T-cell (primary cell): ENCODE measurements at regions of chr17 and their contacts with region 1.

Region 1: GRCh38 chr17:2511462-2512369 is at the start of gene METTL16:
- DNase-seq: peak; percentile 90 to 100 (median 97)
- ATAC-seq: peak; percentile 98 to 99 (median 99)
- H3K4me3 ChIP-seq: peak within 1 kb of the TSS; percentile 70 to 78
- H3K4me3 Mint-ChIP-seq: no peak within 1 kb of the TSS
- H3K27ac ChIP-seq: peak within 1 kb of the TSS; percentile 91
- H3K27ac Mint-ChIP-seq: no peak within 1 kb of the TSS
- H3K4me1 ChIP-seq: peaks cover 16 to 23% of the 10 kb centered on the region in 2 experiments
- H3K4me1 Mint-ChIP-seq: peaks cover 13 to 19% (median 18%) of the 10 kb centered on the region in 3 donors
- H3K27me3 ChIP-seq: no peaks in the 10 kb centered on the region
- H3K27me3 Mint-ChIP-seq: no peaks in the 10 kb centered on the region
- total RNA-seq, gene METTL16: 43.0 to 51.1 (median 43.2) TPM

Region 2: GRCh38 chr17:2396568-2397246 is 115.0 kb before region 1 on chr17:
- CTCF ChIA-PET with region 1: no interaction called
- POLR2A ChIA-PET with region 1: no interaction called
- DNase-seq: peak in 15 of 35 experiments; percentile 22 to 57 (median 35)
- ATAC-seq: no peak
- H3K4me3 ChIP-seq: peak overlapping the region; percentile 25 to 30
- H3K4me3 Mint-ChIP-seq: peak overlapping the region; percentile 39 to 99 (median 54)
- H3K27ac ChIP-seq: peak overlapping the region; percentile 61
- H3K27ac Mint-ChIP-seq: peak overlapping the region; percentile 67 to 85
- H3K4me1 ChIP-seq: peaks cover 22 to 74% of the 10 kb centered on the region in 2 experiments
- H3K4me1 Mint-ChIP-seq: peaks cover 50 to 63% (median 58%) of the 10 kb centered on the region in 3 donors
- H3K27me3 ChIP-seq: no peaks in the 10 kb centered on the region
- H3K27me3 Mint-ChIP-seq: no peaks in the 10 kb centered on the region

Region 3: GRCh38 chr17:2482218-2482617 is 29.5 kb before region 1 on chr17:
- CTCF ChIA-PET with region 1: interaction called in 1 of 2 experiments, 3 read pairs
- POLR2A ChIA-PET with region 1: interaction called in 1 of 2 experiments, 15 read pairs
- DNase-seq: peak in 5 of 35 experiments; percentile 2 to 44 (median 21)
- ATAC-seq: peak; percentile 47 to 87 (median 70)
- H3K4me3 ChIP-seq: peak overlapping the region in 1 of 2 donors; percentile 6
- H3K4me3 Mint-ChIP-seq: peak overlapping the region; percentile 34 to 77 (median 39)
- H3K27ac ChIP-seq: peak overlapping the region; percentile 65
- H3K27ac Mint-ChIP-seq: peak overlapping the region; percentile 84 to 89
- H3K4me1 ChIP-seq: peaks cover 6% of the 10 kb centered on the region in 2 experiments
- H3K4me1 Mint-ChIP-seq: peaks cover 48 to 59% (median 50%) of the 10 kb centered on the region in 3 donors
- H3K27me3 ChIP-seq: no peaks in the 10 kb centered on the region
- H3K27me3 Mint-ChIP-seq: no peaks in the 10 kb centered on the region

Region 4: DNA sequence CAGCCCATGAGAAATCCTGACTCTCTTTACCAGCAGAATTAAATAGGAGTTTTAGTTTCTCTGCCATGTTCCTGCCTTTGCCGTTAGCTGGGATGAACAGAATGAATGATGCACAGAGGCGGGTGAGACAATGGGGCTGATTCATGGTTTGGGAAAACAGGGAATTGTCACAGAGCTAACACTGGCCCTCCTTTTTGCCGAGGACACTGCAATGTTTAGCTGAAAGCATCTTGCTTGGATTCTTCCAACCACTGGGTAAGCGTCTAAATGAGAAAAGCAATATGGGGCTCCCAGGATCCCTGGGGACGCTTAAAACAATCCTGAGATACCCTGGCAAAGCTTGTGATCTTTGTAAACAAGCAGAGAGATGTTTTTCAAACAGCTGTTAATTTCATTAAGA is 68.9 kb after region 1 on chr17:
- CTCF ChIA-PET with region 1: no interaction called
- POLR2A ChIA-PET with region 1: no interaction called
- DNase-seq: no peak
- ATAC-seq: no peak
- H3K4me3 ChIP-seq: no peak overlapping the region
- H3K4me3 Mint-ChIP-seq: no peak overlapping the region
- H3K27ac ChIP-seq: no peak overlapping the region
- H3K27ac Mint-ChIP-seq: no peak overlapping the region
- H3K4me1 ChIP-seq: no peaks in the 10 kb centered on the region
- H3K4me1 Mint-ChIP-seq: no peaks in the 10 kb centered on the region
- H3K27me3 ChIP-seq: peaks cover 0 to 10% of the 10 kb centered on the region in 2 experiments
- H3K27me3 Mint-ChIP-seq: peaks cover 0 to 14% of the 10 kb centered on the region in 2 donors

Region 5: GRCh38 chr17:2656283-2656682 is 144.6 kb after region 1 on chr17:
- CTCF ChIA-PET with region 1: no interaction called
- POLR2A ChIA-PET with region 1: interaction called in 1 of 2 experiments, 10 read pairs
- DNase-seq: no peak
- ATAC-seq: no peak
- H3K4me3 ChIP-seq: no peak overlapping the region
- H3K4me3 Mint-ChIP-seq: no peak overlapping the region
- H3K27ac ChIP-seq: no peak overlapping the region
- H3K27ac Mint-ChIP-seq: no peak overlapping the region
- H3K4me1 ChIP-seq: peaks cover 0 to 17% of the 10 kb centered on the region in 2 experiments
- H3K4me1 Mint-ChIP-seq: peaks cover 58 to 65% (median 59%) of the 10 kb centered on the region in 3 donors
- H3K27me3 ChIP-seq: no peaks in the 10 kb centered on the region
- H3K27me3 Mint-ChIP-seq: no peaks in the 10 kb centered on the region